ENCODE measurements at regions of chr15 and their contacts with region 1.

Region 1: GRCh38 chr15:57541805-57542504 is 49.7 kb upstream of the MYZAP start:
- DNase-seq: peak in 1 of 2 donors; percentile 37
- ATAC-seq: peak in 1 of 3 donors; percentile 40
- H3K4me3 ChIP-seq: no peak overlapping the region
- H3K4me3 Mint-ChIP-seq: no peak overlapping the region
- H3K27ac ChIP-seq: no peak overlapping the region
- H3K27ac Mint-ChIP-seq: no peak overlapping the region
- H3K4me1 ChIP-seq: no peaks in the 10 kb centered on the region
- H3K4me1 Mint-ChIP-seq: no peaks in the 10 kb centered on the region
- H3K27me3 ChIP-seq: no peaks in the 10 kb centered on the region
- H3K27me3 Mint-ChIP-seq: peaks cover 7 to 12% of the 10 kb centered on the region in 2 donors
- CTCF ChIP-seq: peak; percentile 48

Region 2: DNA sequence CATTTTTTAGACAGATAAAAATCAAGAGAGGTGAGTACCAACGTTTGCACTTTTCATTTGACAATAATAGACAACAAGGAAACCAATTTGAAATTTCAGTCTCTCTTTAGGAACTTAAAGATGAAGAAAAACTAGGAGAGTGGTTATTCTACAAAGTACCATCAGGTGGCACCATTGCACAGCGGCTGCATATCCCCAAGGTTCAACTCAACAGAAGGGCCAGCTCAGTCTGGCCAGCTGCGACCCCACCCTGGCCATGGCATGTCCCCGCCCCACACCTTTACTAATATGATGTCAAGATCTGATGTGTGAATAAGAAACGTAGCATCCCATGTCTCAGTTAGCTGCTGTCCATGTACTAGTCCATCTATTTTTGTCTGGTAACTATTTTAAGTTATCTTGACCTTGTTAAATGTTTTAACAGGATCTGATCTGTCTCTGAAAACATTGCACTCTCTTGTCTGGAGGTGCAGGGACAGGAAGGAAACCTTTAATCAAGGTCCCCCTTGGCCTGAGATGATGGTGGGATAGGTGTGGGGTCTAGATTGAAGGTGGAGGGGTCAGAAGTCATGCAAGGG is 201.2 kb before region 1 on chr15:
- intact Hi-C with region 1: loop called (anchors 5 kb)
- DNase-seq: peak in 1 of 2 donors; percentile 58
- ATAC-seq: peak; percentile 44 to 76 (median 68)
- H3K4me3 ChIP-seq: no peak overlapping the region
- H3K4me3 Mint-ChIP-seq: no peak overlapping the region
- H3K27ac ChIP-seq: no peak overlapping the region
- H3K27ac Mint-ChIP-seq: no peak overlapping the region
- H3K4me1 ChIP-seq: no peaks in the 10 kb centered on the region
- H3K4me1 Mint-ChIP-seq: no peaks in the 10 kb centered on the region
- H3K27me3 ChIP-seq: no peaks in the 10 kb centered on the region
- H3K27me3 Mint-ChIP-seq: peaks cover 6 to 18% of the 10 kb centered on the region in 2 donors
- CTCF ChIP-seq: peak; percentile 78

Measured in natural killer cell (primary cell).